A549 (cell line): ENCODE measurements at regions of chr11 and their contacts with region 1.

Region 1: GRCh38 chr11:119030329-119031049 is at the start of gene SLC37A4:
- DNase-seq: peak; percentile 80 to 97
- ATAC-seq: peak; percentile 91 to 95
- H3K4me3 ChIP-seq: peak within 1 kb of the TSS; percentile 85
- H3K27ac ChIP-seq: peak within 1 kb of the TSS; percentile 82 to 92
- H3K4me1 ChIP-seq: peaks cover 12% of the 10 kb centered on the region
- CTCF ChIP-seq: peak; percentile 61
- EP300 ChIP-seq: no peak
- POLR2A ChIP-seq: peak; percentile 56; the same call in 1 of the 2 replicates
- RAD21 ChIP-seq: peak; percentile 43; a peak in 2 of 5 replicates
- polyA plus RNA-seq, gene SLC37A4: 21.2 and 22.8 TPM in 2 replicates

Region 2: DNA sequence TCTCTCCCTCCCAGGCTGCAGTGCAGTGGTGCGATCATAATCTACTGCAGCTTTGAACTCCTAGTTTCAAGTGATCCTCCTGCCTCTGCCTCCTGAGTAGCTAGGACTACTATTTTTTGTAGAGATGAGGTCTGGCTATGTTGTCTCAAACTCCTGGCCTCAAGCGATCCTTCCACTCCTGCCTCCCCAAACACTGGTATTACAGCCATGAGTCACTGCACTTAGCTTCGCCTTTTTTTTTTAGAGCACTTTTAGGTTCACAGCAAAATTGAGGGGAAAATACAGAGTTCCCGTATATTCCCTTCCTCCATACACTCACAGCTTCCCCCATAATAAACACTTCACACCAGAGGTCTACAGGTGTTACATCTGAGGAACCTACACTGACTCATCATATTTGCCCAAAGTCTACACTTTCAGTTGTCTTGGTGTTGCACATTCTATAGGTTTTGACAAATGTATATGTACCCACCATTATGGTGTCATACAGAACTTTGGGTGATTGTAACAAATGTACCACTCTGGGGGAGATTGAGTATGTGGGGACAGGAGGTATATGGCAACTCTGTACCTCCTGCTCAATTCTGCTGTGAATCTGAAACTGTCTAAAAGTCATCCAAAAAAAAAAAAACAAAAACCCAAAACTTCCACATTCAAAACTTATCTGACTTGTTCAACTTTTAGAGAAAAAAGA is 11.5 kb after region 1 on chr11:
- CTCF ChIA-PET with region 1: interaction called, 11 read pairs
- POLR2A ChIA-PET with region 1: interaction called, 3 read pairs
- DNase-seq: no peak
- ATAC-seq: peak; percentile 19 to 41; a peak in 2 of 6 replicates
- H3K4me3 ChIP-seq: no peak overlapping the region
- H3K27ac ChIP-seq: no peak overlapping the region
- H3K4me1 ChIP-seq: no peaks in the 10 kb centered on the region
- CTCF ChIP-seq: no peak
- EP300 ChIP-seq: no peak
- POLR2A ChIP-seq: no peak
- RAD21 ChIP-seq: no peak

Region 3: GRCh38 chr11:119047205-119047604 is 16.7 kb after region 1 on chr11:
- CTCF ChIA-PET with region 1: interaction called, 11 read pairs
- POLR2A ChIA-PET with region 1: interaction called, 3 read pairs
- DNase-seq: no peak
- ATAC-seq: no peak
- H3K4me3 ChIP-seq: no peak overlapping the region
- H3K27ac ChIP-seq: no peak overlapping the region
- H3K4me1 ChIP-seq: no peaks in the 10 kb centered on the region
- CTCF ChIP-seq: no peak
- EP300 ChIP-seq: no peak
- POLR2A ChIP-seq: no peak
- RAD21 ChIP-seq: no peak